Activated CD4-positive, alpha-beta T cell treated with anti-CD3 and anti-CD28 coated beads, Interleukin-2, amount 10 ng/mL, durations not matched to agents 24 days and 14 days (primary cell): ENCODE measurements at regions of chr17 and their contacts with region 1.

Region 1: DNA sequence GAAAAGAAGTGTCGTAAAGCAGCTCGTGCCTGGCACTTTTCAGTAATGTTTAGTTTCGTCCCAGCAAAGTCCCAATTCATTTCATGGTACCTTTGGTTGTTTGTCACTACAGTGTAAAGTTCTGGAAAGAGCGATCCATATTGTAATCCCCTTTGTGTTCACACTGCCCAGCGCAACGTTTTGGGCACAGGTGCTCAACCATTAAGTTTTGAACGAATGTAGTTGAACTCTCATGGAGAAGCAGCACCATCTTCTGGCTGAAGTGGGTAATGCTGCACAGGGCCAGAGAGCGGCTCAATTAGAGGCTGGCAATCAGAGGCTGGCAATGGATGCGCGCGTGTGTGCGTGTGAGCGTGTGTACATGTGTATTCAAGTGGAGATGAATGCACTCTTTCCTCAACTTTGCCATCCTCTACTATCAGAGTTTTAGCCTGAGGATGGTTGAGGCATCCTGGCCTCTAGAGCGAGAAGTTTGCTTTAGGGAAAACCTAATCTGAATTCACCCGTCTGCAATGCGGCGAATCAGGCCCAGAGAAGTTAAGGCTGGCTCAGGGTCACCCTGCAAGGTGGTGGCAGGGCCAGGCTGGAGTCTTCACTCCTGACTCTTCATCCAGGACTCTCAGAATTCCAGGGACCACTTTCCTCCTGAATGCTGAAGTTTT is 29.9 kb downstream of the DYNLL2 start:
- DNase-seq: peak; percentile 96
- H3K4me3 Mint-ChIP-seq: no peak overlapping the region
- H3K27ac Mint-ChIP-seq: no peak overlapping the region
- H3K4me1 Mint-ChIP-seq: no peaks in the 10 kb centered on the region
- H3K27me3 Mint-ChIP-seq: peaks cover 17% of the 10 kb centered on the region

Region 2: GRCh38 chr17:57859601-57860396 is 253.3 kb before region 1 on chr17:
- intact Hi-C with region 1: loop called (anchors 2 kb)
- DNase-seq: no peak
- H3K4me3 Mint-ChIP-seq: no peak overlapping the region
- H3K27ac Mint-ChIP-seq: no peak overlapping the region
- H3K4me1 Mint-ChIP-seq: peaks cover 9% of the 10 kb centered on the region
- H3K27me3 Mint-ChIP-seq: peaks cover 42% of the 10 kb centered on the region

Region 3: GRCh38 chr17:57892146-57892828 is 220.8 kb before region 1 on chr17:
- intact Hi-C with region 1: loop called (anchors 2 kb)
- DNase-seq: peak; percentile 94
- H3K4me3 Mint-ChIP-seq: no peak overlapping the region
- H3K27ac Mint-ChIP-seq: no peak overlapping the region
- H3K4me1 Mint-ChIP-seq: peaks cover 6% of the 10 kb centered on the region
- H3K27me3 Mint-ChIP-seq: peaks cover 3% of the 10 kb centered on the region

Region 4: DNA sequence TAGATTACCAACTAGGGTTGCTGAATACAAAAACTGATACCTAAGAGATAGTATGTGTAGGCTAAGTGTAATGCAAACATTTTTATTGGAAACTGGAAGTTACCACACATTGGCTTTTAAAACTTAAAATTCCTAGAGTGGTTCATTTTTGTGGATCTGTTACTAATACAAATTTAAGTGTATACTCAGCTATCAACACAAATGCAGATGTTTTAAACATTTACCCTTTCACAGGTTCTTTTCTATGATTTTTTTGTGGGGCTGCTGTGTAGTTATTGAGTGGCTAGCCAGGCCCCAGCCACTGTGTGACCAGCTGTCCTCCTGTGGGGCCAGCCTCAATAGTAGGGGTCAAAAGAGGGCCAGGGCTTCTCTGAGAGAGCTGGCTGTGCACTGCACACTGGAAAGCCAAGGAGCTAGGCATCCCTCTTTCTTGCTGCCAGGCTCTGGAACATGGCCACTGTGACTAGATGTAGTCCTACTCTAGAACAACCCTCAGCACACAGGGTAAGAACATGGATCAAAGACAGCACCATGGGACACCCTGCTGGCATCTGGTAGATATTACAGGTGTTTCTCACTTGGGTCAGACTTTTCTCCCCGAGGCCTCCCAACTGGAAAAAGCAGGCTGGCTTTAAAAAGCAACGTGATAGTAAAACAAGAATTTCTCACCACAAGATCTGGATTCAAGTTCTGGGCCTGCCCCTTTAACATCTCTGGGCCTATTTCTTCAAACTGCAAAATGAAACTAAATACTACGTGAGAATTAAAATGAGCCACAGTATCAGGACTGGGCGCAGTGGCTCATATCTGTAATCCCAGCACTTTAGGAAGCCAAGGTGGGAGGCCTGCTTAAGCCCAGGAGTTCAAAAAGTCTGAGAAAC is 117.8 kb before region 1 on chr17:
- intact Hi-C with region 1: loop called (anchors 2 kb)
- DNase-seq: peak; percentile 83
- H3K4me3 Mint-ChIP-seq: no peak overlapping the region
- H3K27ac Mint-ChIP-seq: peak overlapping the region; percentile 43
- H3K4me1 Mint-ChIP-seq: peaks cover 39% of the 10 kb centered on the region
- H3K27me3 Mint-ChIP-seq: no peaks in the 10 kb centered on the region

Region 5: DNA sequence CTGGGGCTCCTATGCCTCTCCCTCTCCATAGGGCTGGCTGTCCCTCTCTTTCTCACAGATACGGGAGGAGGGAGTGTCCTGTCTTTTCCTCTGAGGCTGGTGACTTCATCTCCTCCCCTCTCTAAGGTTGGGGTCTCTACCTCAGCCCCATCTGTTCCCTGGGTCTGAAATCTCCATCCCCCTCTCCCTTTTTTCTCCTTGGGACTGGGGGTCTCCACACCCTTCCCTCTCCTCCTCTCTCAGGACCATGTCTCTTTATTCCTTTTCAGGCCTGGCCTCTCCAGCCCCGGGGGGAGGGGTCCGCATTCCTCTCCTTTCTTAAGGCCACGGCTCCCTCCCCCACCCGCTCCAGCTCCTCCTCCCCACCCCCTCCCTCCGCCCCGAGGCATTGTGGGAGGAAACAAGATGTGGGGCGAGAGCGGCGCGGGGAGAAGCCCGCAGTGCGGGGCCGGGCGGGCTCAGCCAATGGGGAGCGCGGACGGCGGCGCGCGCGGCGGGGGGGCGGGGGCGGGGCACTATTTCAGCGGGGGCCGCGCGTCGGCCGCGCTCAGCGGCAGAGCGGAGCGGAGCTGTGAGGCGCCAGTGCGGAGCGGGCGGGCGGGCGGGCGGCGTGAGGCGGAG is 30.1 kb before region 1 on chr17 and contains the start of gene DYNLL2:
- intact Hi-C with region 1: loop called (anchors 1 kb)
- DNase-seq: peak; percentile 95
- H3K4me3 Mint-ChIP-seq: peak within 1 kb of the TSS; percentile 88
- H3K27ac Mint-ChIP-seq: peak within 1 kb of the TSS; percentile 80
- H3K4me1 Mint-ChIP-seq: peaks cover 26% of the 10 kb centered on the region
- H3K27me3 Mint-ChIP-seq: peaks cover 20% of the 10 kb centered on the region
- total RNA-seq, gene DYNLL2: 36.6 and 37.2 TPM in 2 replicates

Region 6: DNA sequence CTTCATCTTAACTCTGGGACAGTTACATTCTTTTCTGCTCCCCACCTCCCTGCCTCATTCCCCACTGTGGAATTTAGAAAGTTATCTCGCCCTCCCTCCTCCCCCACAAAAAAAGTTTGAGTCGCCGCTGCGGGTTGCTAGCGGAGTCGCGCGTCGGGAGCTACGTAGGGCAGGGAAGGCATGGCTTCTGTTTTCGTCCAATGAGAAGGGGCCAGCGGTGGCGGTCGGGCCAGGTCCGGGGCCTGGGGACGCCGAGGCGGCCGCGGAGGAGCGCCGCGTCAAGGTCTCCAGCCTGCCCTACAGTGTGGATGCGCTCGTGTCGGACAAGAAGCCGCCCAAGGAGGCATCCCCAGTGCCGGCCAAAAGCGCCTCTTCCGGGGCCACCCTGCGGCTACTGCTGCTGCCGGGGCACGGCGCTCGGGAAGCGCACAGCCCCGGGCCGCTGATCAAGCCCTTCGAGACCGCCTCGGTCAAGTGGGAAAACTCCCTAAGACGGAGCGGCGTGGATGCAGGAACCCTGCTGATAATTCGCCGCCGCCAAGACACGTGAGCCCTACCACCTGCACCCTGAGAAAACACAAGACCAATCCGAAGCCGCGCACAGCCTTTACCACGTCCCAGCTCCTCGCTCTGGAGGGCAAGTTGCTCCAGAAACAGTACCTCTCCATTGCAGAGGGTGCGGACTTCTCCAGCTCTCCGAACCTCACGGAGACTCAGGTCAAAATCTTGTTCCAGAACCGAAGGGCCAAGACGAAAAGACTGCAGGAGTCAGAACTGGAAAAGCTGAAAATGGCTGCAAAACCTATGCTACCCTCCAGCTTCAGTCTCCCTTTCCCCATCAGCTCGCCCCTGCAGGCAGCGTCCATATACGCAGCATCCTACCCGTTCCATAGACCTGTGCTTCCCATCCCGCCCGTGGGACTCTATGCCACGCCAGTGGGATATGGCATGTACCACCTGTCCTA is 44.0 kb after region 1 on chr17:
- intact Hi-C with region 1: no loop called
- DNase-seq: peak; percentile 86
- H3K4me3 Mint-ChIP-seq: peak overlapping the region; percentile 85
- H3K27ac Mint-ChIP-seq: peak overlapping the region; percentile 23
- H3K4me1 Mint-ChIP-seq: peaks cover 43% of the 10 kb centered on the region
- H3K27me3 Mint-ChIP-seq: peaks cover 20% of the 10 kb centered on the region